GM13976 (cell line): ENCODE measurements at regions of chr7 and their contacts with region 1.

Region 1: DNA sequence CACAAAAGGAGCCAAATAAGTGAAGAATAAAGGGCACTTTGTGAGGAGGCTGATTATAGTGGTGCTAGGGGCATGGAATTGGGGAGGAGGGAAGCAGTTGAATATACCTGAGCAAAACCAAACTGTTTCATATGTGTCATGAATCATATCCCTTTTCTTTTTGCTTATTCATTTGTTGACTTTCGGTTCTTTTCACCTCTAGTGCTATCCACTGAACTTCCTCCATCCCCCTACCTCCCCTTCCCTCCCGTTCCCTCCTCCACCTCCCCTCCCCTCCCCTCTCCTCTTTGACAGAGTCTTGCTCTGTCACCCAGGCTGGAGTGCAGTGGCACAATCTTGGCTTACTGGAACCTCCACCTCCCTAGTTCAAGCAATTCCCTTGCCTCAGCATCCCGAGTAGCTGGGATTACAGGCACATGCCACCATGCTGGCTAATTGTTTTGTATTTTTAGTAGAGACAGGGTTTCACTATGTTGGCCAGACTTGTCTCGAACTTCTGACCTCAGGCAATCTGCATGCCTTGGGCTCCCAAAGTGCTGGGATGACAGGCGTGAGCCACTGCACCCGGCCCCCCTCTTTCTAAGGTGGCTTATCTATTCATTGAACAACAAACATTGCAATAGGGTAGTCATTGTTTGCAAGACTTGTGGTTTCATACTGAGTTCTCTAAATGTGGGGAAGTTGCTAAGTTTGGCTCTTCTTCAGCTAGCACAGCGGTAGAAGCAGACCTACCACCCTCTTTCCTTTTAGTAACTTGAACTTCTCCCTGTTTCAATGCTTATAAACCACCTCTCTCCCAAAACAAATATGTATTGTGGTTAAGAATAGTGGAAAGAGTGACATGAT is 150.4 kb upstream of the PRPS1L1 start:
- DNase-seq: peak; percentile 59
- CTCF ChIP-seq: no peak

Region 2: GRCh38 chr7:18086165-18087030 is 91.6 kb before region 1 on chr7:
- in situ Hi-C with region 1: loop called (anchors 25 kb)
- DNase-seq: peak; percentile 39
- CTCF ChIP-seq: no peak

Region 3: DNA sequence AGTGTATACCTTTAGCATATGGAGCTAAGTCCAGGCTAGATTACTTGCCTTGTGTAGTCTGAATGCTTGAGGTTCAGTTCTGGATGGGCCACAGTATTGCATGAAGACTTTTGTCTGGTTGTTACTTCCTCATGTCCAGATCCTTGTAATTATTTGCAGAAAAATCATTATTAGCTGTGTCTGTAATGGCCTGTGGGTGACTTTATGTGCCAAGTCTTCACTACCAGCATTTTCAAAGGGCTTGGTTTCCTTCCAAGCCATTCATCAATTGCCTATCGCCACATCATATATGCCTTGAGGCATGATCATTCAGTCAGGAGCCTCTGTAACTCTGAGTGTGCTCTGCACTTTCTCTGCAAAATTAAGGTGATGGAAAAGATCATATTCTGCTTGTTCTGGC is 303.7 kb after region 1 on chr7:
- in situ Hi-C with region 1: no loop called
- DNase-seq: no peak
- CTCF ChIP-seq: no peak

Region 4: DNA sequence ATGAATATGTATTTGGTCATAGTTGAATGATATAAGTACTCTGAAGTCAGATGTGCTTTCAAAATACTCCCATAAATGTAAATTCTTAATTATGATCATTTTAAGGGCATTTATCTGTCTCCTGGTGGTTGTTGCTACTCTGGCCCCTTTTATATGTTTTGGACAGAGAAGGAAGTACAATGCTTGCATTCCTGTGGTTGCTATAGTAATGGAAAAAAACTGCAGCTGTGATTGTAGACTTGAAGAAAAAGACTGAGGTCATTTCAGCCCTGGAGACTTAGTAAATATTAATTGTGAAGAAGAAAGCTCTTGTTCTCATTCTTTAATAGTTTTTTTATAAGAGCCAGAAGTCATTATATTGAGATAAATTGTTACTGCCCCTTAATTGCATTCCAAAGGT is 1037.4 kb after region 1 on chr7:
- in situ Hi-C with region 1: no loop called
- DNase-seq: no peak
- CTCF ChIP-seq: no peak